ENCODE measurements at regions of chr16 and their contacts with region 1.

Region 1: GRCh38 chr16:19886073-19886941 is 1.7 kb upstream of the GPRC5B start:
- DNase-seq: peak; percentile 67 to 91
- H3K4me3 ChIP-seq: no peak overlapping the region
- H3K4me1 ChIP-seq: peaks cover 21% of the 10 kb centered on the region
- H3K27me3 ChIP-seq: no peaks in the 10 kb centered on the region

Region 2: DNA sequence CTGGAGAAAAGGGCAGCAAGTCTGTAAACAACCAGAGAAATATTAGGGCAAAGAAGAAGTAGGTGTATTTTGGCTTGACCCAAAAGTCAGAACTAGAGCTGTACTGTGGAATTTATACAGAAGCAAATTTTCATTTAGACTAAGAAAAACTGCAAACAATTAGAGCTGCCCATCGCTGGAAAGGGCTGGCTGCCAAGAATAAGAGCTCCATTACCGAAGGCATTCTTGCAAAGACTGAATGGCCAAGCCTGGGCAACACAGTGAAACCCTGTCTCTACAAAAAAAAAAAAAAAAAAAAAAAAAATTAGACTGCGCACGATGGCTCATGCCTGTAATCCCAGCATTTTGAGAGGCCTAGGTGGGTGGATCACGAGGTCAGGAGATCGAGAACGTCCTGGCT is 522.6 kb before region 1 on chr16:
- in situ Hi-C with region 1: no loop called
- DNase-seq: no peak
- H3K4me3 ChIP-seq: no peak overlapping the region
- H3K4me1 ChIP-seq: no peaks in the 10 kb centered on the region
- H3K27me3 ChIP-seq: no peaks in the 10 kb centered on the region

Region 3: DNA sequence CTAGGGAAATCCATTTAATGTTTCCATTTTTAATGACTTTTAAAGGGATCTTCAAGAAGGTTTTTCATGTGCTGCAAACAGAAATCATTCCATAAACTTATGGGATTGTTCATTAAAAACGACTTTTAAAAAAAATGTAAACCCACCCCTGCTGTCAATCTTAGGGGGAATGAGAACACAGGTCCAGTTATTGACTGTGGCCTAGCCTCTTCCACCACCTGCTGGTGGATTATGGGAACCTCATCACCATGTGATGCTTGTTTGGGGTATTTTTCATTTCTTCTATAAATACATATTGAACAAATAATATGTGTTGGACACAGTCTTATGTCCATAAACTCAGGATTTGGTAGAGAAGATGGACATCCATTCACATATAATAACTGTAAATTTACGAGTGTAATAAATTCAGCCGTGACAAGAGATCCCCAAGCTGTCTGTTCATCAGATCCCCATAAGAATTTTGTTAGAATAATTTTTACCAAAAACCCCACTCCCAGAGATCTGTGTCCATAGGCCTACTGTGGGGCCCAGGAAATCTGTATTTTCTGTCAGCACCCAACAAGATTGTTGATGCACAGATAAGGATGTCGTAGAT is 510.6 kb before region 1 on chr16:
- in situ Hi-C with region 1: loop called (anchors 25 kb)
- DNase-seq: peak; percentile 59 to 64
- H3K4me3 ChIP-seq: no peak overlapping the region
- H3K4me1 ChIP-seq: no peaks in the 10 kb centered on the region
- H3K27me3 ChIP-seq: no peaks in the 10 kb centered on the region

Region 4: GRCh38 chr16:19555162-19555937 is 331.0 kb before region 1 on chr16 and contains the start of gene VPS35L:
- in situ Hi-C with region 1: loop called (anchors 5 kb)
- DNase-seq: peak; percentile 95 to 99
- H3K4me3 ChIP-seq: peak within 1 kb of the TSS; percentile 77
- H3K4me1 ChIP-seq: peaks cover 7% of the 10 kb centered on the region; the same call in 1 of the 2 replicates
- H3K27me3 ChIP-seq: no peaks in the 10 kb centered on the region

Region 5: GRCh38 chr16:19601083-19601976 is 285.0 kb before region 1 on chr16:
- in situ Hi-C with region 1: loop called (anchors 5 kb)
- DNase-seq: peak; percentile 20 to 58
- H3K4me3 ChIP-seq: no peak overlapping the region
- H3K4me1 ChIP-seq: no peaks in the 10 kb centered on the region
- H3K27me3 ChIP-seq: no peaks in the 10 kb centered on the region

Region 6: DNA sequence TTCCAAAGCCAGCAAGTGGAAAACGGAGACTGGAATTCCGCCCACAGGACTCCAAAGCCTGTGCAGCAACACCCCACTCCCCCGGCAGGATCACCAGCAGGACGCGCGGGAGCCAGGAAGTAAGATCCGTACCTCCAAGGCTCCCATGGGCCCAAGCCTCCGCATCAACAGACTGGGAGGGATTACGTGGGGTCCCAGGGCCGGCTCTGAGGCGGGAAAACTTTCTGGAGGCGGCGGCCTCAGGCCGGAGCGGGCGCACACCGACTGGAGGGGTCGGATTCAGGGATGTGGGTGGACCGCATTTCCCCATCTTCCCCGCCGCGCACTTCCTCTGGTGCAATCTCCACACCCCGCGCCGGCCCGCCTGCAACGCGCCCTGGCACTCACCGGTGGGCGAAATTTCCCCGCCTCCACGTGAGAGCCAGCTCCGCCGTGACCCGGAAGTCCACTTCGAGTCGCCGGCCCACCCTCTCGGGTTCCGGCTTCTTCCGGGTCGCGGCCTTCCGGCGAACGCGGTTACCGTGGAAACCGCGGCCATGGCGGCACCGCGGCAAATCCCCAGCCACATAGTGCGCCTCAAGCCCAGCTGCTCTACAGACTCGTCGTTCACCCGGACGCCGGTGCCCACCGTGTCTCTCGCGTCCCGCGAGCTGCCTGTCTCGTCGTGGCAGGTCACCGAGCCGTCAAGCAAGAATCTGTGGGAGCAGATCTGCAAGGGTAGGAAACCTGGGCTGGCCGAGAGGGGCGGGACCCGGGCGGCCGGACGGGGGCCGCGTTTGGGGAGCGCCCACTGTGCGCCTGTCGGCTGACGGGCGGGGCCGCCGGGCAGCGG is 168.3 kb before region 1 on chr16 and contains the starts of genes IQCK and KNOP1:
- in situ Hi-C with region 1: loop called (anchors 5 kb)
- DNase-seq: peak; percentile 88 to 93
- H3K4me3 ChIP-seq: peak within 1 kb of the TSS; percentile 84
- H3K4me1 ChIP-seq: peaks cover 12% of the 10 kb centered on the region
- H3K27me3 ChIP-seq: no peaks in the 10 kb centered on the region

Measured in HAP-1 (cell line).